ENCODE measurements at regions of chr7 and their contacts with region 1.

Region 1: GRCh38 chr7:142365410-142365842 is 107.6 kb upstream of the PRSS58 start:
- DNase-seq: no peak
- H3K4me3 ChIP-seq: no peak overlapping the region
- H3K27ac ChIP-seq: no peak overlapping the region
- H3K4me1 ChIP-seq: peaks cover 0 to 5% (median 1%) of the 10 kb centered on the region in 4 experiments
- H3K27me3 ChIP-seq: no peaks in the 10 kb centered on the region

Region 2: DNA sequence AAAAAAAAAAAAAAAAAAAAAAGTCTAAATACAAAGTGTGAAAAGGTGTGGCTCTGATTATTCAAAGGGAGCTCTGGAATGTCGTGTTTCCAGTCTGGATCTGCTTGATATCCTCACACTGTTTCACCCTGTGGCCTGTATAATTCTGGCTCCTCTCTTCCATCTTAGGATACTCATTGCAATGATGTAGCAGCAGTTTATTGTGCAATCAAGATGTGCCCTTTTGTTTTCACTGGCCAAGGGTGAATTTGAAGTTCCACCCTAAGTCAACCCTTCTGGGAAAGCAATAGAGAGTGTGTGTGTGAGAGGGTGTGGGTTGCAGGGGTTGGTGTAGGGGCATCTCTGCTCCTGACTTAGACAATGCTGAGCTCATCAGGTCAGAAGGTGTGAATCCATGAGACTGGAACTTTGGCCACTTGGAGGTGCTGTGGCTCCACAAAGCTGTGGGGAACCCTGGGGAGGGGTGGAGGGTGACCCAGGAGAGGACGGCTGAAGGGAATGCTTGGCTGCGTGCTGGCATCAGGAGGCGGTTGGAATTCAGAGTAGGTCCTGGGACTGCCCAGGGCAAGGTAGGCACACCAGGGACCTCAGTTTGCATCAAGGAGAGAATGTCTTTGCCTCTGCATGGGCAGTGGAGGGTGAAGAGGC is 10.4 kb after region 1 on chr7:
- CTCF ChIA-PET with region 1: interaction called, 152 read pairs
- POLR2A ChIA-PET with region 1: no interaction called
- DNase-seq: peak in 2 of 3 donors; percentile 33 to 44
- H3K4me3 ChIP-seq: no peak overlapping the region
- H3K27ac ChIP-seq: no peak overlapping the region
- H3K4me1 ChIP-seq: peaks cover 0 to 19% (median 11%) of the 10 kb centered on the region in 4 experiments
- H3K27me3 ChIP-seq: no peaks in the 10 kb centered on the region